Activated B cell treated with CpG ODN at 0.5 μM for 24 hours (primary cell): ENCODE measurements at regions of chr2 and their contacts with region 1.

Region 1: DNA sequence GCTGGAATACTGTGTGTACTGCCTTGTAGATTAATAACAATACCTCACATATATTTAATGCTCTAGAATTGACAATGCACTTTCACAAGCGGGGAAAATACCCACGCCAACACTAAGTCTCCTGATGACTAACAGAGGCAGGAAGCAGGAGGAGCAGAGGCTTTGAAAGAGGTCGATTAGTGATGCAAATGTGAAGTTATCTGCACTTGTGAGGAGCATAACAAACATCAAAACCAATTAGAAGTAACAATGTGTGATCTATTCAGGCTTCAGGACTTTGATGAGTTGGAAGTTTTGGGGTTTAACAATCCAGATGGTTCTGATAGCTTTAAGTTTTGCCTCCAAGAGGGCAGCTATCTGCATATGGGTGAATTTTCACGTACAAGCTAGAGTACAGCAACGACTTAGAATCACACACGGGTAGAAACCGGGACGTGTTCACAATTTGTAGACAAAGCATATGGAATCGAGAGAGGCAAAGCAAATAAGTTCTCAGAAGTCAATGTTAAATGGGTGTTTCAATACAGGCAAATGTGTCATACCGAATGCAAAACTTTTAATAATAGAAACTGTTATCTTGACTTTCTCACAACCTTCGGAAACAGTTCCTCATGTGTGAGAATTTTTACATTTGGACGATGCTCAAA is 114.5 kb downstream of the METTL8 start:
- DNase-seq: no peak
- ATAC-seq: peak; percentile 61
- H3K4me3 Mint-ChIP-seq: peak overlapping the region; percentile 80
- H3K27ac Mint-ChIP-seq: peak overlapping the region; percentile 92
- H3K4me1 Mint-ChIP-seq: peaks cover 74% of the 10 kb centered on the region
- H3K27me3 Mint-ChIP-seq: no peaks in the 10 kb centered on the region
- CTCF ChIP-seq: no peak

Region 2: GRCh38 chr2:171244970-171245782 is 74.1 kb before region 1 on chr2:
- CTCF ChIA-PET with region 1: no interaction called
- POLR2A ChIA-PET with region 1: interaction called, 3 read pairs
- intact Hi-C with region 1: loop called (anchors 5 kb)
- DNase-seq: no peak
- ATAC-seq: no peak
- H3K4me3 Mint-ChIP-seq: no peak overlapping the region
- H3K27ac Mint-ChIP-seq: no peak overlapping the region
- H3K4me1 Mint-ChIP-seq: peaks cover 15% of the 10 kb centered on the region
- H3K27me3 Mint-ChIP-seq: no peaks in the 10 kb centered on the region
- CTCF ChIP-seq: no peak

Region 3: DNA sequence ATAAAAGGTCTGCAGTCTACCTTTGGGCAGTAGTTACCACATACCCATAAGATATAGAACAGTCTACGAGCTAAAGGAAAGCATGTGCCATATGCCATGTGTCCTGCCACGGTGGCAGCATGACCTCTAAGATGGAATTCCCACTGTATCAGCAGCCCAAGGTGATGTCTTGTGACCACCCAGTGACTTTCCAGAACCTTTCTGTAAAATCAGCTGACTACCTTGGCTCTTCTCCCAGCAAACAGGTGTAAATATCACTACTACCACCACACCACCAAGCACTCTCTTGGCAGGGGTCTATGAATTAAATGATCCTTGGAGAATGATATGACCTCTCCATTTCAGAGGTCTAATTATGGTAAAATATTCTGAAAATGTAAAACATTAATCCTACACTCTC is 14.9 kb after region 1 on chr2:
- CTCF ChIA-PET with region 1: no interaction called
- POLR2A ChIA-PET with region 1: interaction called, 22 read pairs
- intact Hi-C with region 1: loop called (anchors 1 kb)
- DNase-seq: no peak
- ATAC-seq: no peak
- H3K4me3 Mint-ChIP-seq: no peak overlapping the region
- H3K27ac Mint-ChIP-seq: no peak overlapping the region
- H3K4me1 Mint-ChIP-seq: peaks cover 56% of the 10 kb centered on the region
- H3K27me3 Mint-ChIP-seq: no peaks in the 10 kb centered on the region
- CTCF ChIP-seq: no peak

Region 4: DNA sequence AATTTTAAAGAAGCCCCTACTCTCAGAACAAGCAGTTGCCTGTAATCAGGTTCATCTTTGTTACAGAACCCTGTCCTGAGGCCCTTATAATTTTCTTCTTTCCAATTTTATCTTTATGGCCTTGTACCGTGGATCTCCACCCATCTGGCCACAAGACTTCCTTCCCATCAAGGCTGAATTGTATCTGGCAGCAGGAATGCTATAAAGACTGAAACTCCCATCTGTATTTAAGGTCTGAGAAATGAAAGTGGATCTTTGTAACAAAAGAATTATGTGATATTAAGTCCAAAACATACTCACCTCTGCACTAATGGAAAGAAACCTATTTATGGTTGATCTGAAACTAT is 22.8 kb after region 1 on chr2:
- CTCF ChIA-PET with region 1: no interaction called
- POLR2A ChIA-PET with region 1: interaction called, 14 read pairs
- intact Hi-C with region 1: no loop called
- DNase-seq: no peak
- ATAC-seq: no peak
- H3K4me3 Mint-ChIP-seq: no peak overlapping the region
- H3K27ac Mint-ChIP-seq: peak overlapping the region; percentile 76
- H3K4me1 Mint-ChIP-seq: peaks cover 33% of the 10 kb centered on the region
- H3K27me3 Mint-ChIP-seq: no peaks in the 10 kb centered on the region
- CTCF ChIP-seq: no peak